Activated B cell treated with CpG ODN at 0.5 μM for 24 hours (primary cell): ENCODE measurements at regions of chr17 and their contacts with region 1.

Region 1: DNA sequence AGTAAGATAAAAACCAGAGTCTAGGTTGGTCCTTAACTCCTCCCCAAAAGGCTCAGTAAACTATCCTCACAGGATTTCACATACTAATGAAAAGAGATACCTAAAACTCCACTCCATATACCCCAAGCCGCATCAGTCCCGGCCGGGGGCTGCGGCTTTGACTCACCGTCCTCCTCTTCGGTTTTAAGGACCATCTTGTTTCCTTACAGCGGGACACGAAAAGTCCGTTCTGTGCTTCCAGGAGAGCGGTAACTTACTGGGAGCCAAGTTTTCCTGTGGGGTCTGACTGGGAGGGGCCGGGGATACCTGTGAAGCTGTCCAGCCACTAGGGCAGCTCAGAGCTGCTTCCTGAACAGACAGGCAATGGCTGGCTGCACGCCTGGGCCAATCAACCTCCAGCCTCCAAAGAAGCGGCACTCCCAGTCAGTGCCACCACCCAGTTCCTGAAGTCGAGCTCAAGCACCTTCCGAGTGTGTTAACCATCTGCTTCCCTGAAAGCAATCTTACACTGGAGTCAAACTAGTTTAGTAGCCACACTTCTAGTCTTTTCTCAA is 45.5 kb downstream of the CYTH1 start:
- DNase-seq: peak; percentile 57
- ATAC-seq: peak; percentile 51
- H3K4me3 Mint-ChIP-seq: peak overlapping the region; percentile 92
- H3K27ac Mint-ChIP-seq: peak overlapping the region; percentile 90
- H3K4me1 Mint-ChIP-seq: peaks cover 81% of the 10 kb centered on the region
- H3K27me3 Mint-ChIP-seq: no peaks in the 10 kb centered on the region
- CTCF ChIP-seq: no peak

Region 2: DNA sequence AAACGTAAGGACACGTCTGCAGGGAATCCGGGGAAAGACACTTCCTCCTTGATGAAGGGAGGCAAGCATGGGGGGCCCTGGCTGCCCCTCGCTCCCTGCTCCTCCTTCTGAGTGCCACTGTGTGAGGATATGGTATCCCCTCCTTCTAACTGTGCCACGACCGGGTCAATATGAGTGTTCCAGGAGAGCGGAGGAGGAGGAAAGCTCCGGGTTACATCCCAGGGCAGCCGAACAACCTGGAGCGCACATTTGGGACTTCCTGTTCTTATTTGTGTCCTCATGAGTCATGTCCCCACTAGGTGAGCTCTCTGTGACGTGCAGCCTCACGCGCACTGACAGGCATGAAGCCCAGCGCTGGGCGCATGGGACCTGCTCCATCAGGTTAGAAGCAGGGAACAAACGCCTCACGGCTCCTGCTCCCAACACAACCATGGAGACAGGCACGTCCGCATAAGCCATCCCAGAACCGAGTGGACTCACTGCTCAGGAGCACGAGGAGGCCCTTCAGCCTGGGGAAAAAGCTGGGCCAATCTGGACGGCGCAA is 66.6 kb before region 1 on chr17:
- CTCF ChIA-PET with region 1: no interaction called
- POLR2A ChIA-PET with region 1: no interaction called
- intact Hi-C with region 1: no loop called
- DNase-seq: no peak
- ATAC-seq: no peak
- H3K4me3 Mint-ChIP-seq: no peak overlapping the region
- H3K27ac Mint-ChIP-seq: no peak overlapping the region
- H3K4me1 Mint-ChIP-seq: peaks cover 20% of the 10 kb centered on the region
- H3K27me3 Mint-ChIP-seq: no peaks in the 10 kb centered on the region
- CTCF ChIP-seq: no peak

Region 3: GRCh38 chr17:78697554-78698343 is 38.9 kb before region 1 on chr17:
- CTCF ChIA-PET with region 1: interaction called, 5 read pairs
- POLR2A ChIA-PET with region 1: interaction called, 67 read pairs
- intact Hi-C with region 1: loop called (anchors 1 kb)
- DNase-seq: no peak
- ATAC-seq: peak; percentile 73
- H3K4me3 Mint-ChIP-seq: peak overlapping the region; percentile 25
- H3K27ac Mint-ChIP-seq: peak overlapping the region; percentile 80
- H3K4me1 Mint-ChIP-seq: peaks cover 54% of the 10 kb centered on the region
- H3K27me3 Mint-ChIP-seq: no peaks in the 10 kb centered on the region
- CTCF ChIP-seq: no peak

Region 4: GRCh38 chr17:78723001-78723796 is 13.4 kb before region 1 on chr17:
- CTCF ChIA-PET with region 1: interaction called, 11 read pairs
- POLR2A ChIA-PET with region 1: interaction called, 396 read pairs
- intact Hi-C with region 1: loop called (anchors 1 kb)
- DNase-seq: no peak
- ATAC-seq: no peak
- H3K4me3 Mint-ChIP-seq: peak overlapping the region; percentile 77
- H3K27ac Mint-ChIP-seq: peak overlapping the region; percentile 91
- H3K4me1 Mint-ChIP-seq: peaks cover 99% of the 10 kb centered on the region
- H3K27me3 Mint-ChIP-seq: no peaks in the 10 kb centered on the region
- CTCF ChIP-seq: no peak

Region 5: GRCh38 chr17:78759203-78759968 is 22.8 kb after region 1 on chr17:
- CTCF ChIA-PET with region 1: interaction called, 3 read pairs
- POLR2A ChIA-PET with region 1: interaction called, 15 read pairs
- intact Hi-C with region 1: loop called (anchors 2 kb)
- DNase-seq: no peak
- ATAC-seq: peak; percentile 74
- H3K4me3 Mint-ChIP-seq: peak overlapping the region; percentile 70
- H3K27ac Mint-ChIP-seq: peak overlapping the region; percentile 94
- H3K4me1 Mint-ChIP-seq: peaks cover 81% of the 10 kb centered on the region
- H3K27me3 Mint-ChIP-seq: no peaks in the 10 kb centered on the region
- CTCF ChIP-seq: no peak

Region 6: GRCh38 chr17:78774956-78775571 is 38.5 kb after region 1 on chr17:
- CTCF ChIA-PET with region 1: no interaction called
- POLR2A ChIA-PET with region 1: interaction called, 65 read pairs
- intact Hi-C with region 1: loop called (anchors 1 kb)
- DNase-seq: peak; percentile 57
- ATAC-seq: peak; percentile 56
- H3K4me3 Mint-ChIP-seq: peak overlapping the region; percentile 88
- H3K27ac Mint-ChIP-seq: peak overlapping the region; percentile 97
- H3K4me1 Mint-ChIP-seq: peaks cover 85% of the 10 kb centered on the region
- H3K27me3 Mint-ChIP-seq: no peaks in the 10 kb centered on the region
- CTCF ChIP-seq: no peak

Region 7: DNA sequence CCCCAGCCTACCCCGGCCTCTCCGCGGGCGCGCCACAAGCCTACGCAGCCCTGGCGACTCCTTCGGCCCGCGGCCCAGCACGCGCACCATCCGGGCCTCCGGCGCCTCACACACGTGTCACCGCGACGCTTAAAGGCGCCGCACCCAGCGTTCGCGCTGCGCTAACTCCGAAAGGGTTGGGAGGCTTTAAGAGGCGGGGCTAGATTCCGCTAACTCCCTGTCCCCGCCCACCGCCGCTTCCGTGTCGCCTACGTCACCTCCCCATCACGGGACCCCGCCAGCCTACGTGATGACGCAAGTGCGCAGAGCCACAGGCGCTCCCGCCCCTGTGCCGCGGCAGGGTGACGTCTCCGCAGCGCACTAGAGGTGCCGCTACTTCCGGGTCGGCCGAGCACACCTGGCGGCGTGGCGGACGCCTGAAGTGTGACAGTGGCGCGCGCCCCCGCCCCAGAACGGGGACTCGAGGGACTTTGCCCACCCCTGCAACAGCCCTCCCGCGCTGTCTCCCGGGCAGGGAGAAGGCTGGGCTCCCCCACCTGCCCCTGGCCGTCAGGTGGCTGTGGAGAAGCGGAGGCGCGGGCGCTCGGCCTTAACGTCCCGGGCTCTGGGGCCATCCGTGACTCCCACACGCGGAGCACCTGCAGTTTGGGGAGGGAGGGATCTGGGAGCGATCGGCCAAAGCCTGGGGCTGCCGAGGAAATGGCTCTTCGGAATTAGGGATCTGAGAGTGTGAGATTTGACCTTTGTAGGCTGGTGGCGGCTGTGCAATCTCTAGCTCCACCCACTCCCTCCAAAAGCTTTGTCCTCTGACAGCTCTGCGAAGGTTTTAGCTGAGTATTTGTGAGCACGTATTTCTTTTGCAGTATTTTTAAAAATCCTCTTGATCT is 104.4 kb after region 1 on chr17 and contains the start of gene USP36:
- CTCF ChIA-PET with region 1: no interaction called
- POLR2A ChIA-PET with region 1: interaction called, 5 read pairs
- intact Hi-C with region 1: loop called (anchors 1 kb)
- DNase-seq: peak; percentile 99
- ATAC-seq: peak; percentile 85
- H3K4me3 Mint-ChIP-seq: peak within 1 kb of the TSS; percentile 93
- H3K27ac Mint-ChIP-seq: peak within 1 kb of the TSS; percentile 94
- H3K4me1 Mint-ChIP-seq: peaks cover 42% of the 10 kb centered on the region
- H3K27me3 Mint-ChIP-seq: no peaks in the 10 kb centered on the region
- CTCF ChIP-seq: no peak
- total RNA-seq, gene USP36: 93.8 and 107 TPM in 2 replicates